ENCODE measurements at regions of chr3 and their contacts with region 1.

Region 1: GRCh38 chr3:13091898-13092611 is 18.8 kb upstream of the IQSEC1 start:
- DNase-seq: peak; percentile 90
- ATAC-seq: peak; percentile 92
- H3K4me3 Mint-ChIP-seq: no peak overlapping the region
- H3K27ac Mint-ChIP-seq: no peak overlapping the region
- H3K4me1 Mint-ChIP-seq: peaks cover 2% of the 10 kb centered on the region
- H3K27me3 Mint-ChIP-seq: no peaks in the 10 kb centered on the region

Region 2: DNA sequence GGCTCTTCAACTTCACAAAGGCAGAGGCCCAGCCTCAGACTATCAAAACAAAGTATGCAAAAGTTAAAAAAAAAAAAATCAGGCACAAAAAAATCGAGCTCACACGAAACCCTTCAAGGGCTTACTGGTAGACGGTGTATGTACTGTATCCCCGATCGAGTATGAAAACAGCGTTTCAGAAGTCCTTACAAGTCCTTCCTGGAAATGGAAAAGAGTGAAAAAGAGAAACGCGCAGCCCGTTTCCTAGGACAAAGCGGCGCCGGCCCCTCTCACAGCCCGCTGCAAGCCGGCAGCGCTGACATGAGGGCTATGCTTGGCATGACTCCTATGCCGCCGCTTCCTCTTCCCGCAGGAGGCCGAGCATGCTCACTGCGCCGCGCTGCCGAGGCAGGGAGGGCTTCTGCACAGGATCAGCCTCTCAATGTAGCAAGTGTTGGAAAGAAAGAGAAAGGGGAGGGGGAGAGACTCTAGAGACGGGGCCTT is 1448.4 kb before region 1 on chr3 and contains the start of gene VGLL4:
- CTCF ChIA-PET with region 1: no interaction called
- POLR2A ChIA-PET with region 1: no interaction called
- intact Hi-C with region 1: no loop called
- DNase-seq: peak; percentile 85
- ATAC-seq: peak; percentile 74
- H3K4me3 Mint-ChIP-seq: peak within 1 kb of the TSS; percentile 99
- H3K27ac Mint-ChIP-seq: peak within 1 kb of the TSS; percentile 99
- H3K4me1 Mint-ChIP-seq: peaks cover 33% of the 10 kb centered on the region
- H3K27me3 Mint-ChIP-seq: no peaks in the 10 kb centered on the region
- total RNA-seq, gene VGLL4: 24.4 to 24.9 TPM

Region 3: DNA sequence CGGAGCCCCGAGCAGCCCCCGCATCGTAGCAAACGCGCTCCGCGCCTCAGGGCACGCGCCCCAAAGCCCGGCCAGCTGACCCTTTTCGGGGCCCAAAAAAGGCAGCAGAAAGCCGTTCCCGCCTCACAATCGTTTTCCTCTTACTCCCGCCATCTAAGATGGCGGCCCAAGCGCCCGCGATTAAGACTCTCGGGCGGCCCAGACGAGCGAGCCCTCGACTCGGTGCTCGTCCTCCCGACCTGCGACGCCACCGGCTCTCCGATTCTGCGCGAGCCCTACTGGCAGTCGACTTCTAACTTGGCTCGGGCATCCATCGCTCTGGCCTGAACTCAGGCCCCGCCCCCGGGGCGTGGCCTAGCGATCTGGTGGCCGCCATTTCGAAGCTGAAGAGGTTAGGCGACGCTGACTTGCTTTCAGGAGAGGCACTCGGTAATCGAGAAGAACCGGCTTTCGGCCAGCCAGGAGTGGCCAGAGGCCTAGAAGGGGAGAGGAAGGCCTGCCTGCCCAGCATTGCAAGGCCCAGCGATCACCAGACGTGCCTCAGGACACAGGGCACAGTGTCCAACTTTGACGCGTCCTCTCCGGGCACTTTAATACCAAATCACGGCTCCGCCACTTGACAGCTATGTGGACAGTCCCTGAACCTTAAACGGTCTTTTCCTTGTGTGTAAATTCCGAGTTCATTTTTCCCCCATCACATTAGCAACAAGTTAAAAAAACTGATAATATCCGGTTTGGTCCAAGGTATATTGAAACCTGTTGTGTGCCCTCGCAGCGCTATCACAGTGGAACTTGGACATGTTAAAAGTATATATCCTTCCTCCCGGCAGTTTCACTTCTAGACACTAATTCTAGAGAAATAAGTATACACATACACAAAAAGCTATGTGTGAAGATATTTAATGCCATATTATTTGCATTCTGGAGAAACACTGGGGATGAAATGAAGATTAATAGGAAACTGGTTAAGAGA is 427.8 kb before region 1 on chr3 and contains the start of gene RAF1:
- CTCF ChIA-PET with region 1: no interaction called
- POLR2A ChIA-PET with region 1: no interaction called
- intact Hi-C with region 1: no loop called
- DNase-seq: peak; percentile 99
- ATAC-seq: peak; percentile 94
- H3K4me3 Mint-ChIP-seq: peak within 1 kb of the TSS; percentile 81
- H3K27ac Mint-ChIP-seq: peak within 1 kb of the TSS; percentile 96
- H3K4me1 Mint-ChIP-seq: peaks cover 25% of the 10 kb centered on the region
- H3K27me3 Mint-ChIP-seq: no peaks in the 10 kb centered on the region
- total RNA-seq, gene RAF1: 66.8 to 74.7 TPM

Region 4: GRCh38 chr3:13080591-13080990 is 11.5 kb before region 1 on chr3:
- CTCF ChIA-PET with region 1: interaction called, 10 read pairs
- POLR2A ChIA-PET with region 1: no interaction called
- intact Hi-C with region 1: no loop called
- DNase-seq: no peak
- ATAC-seq: no peak
- H3K4me3 Mint-ChIP-seq: no peak overlapping the region
- H3K27ac Mint-ChIP-seq: no peak overlapping the region
- H3K4me1 Mint-ChIP-seq: peaks cover 4% of the 10 kb centered on the region
- H3K27me3 Mint-ChIP-seq: no peaks in the 10 kb centered on the region

Region 5: GRCh38 chr3:13282986-13283876 is 191.2 kb after region 1 on chr3:
- CTCF ChIA-PET with region 1: interaction called, 3 read pairs
- POLR2A ChIA-PET with region 1: no interaction called
- intact Hi-C with region 1: loop called (anchors 5 kb)
- DNase-seq: peak; percentile 50
- ATAC-seq: peak; percentile 56
- H3K4me3 Mint-ChIP-seq: peak overlapping the region; percentile 62
- H3K27ac Mint-ChIP-seq: no peak overlapping the region
- H3K4me1 Mint-ChIP-seq: peaks cover 6% of the 10 kb centered on the region
- H3K27me3 Mint-ChIP-seq: peaks cover 40% of the 10 kb centered on the region

Region 6: DNA sequence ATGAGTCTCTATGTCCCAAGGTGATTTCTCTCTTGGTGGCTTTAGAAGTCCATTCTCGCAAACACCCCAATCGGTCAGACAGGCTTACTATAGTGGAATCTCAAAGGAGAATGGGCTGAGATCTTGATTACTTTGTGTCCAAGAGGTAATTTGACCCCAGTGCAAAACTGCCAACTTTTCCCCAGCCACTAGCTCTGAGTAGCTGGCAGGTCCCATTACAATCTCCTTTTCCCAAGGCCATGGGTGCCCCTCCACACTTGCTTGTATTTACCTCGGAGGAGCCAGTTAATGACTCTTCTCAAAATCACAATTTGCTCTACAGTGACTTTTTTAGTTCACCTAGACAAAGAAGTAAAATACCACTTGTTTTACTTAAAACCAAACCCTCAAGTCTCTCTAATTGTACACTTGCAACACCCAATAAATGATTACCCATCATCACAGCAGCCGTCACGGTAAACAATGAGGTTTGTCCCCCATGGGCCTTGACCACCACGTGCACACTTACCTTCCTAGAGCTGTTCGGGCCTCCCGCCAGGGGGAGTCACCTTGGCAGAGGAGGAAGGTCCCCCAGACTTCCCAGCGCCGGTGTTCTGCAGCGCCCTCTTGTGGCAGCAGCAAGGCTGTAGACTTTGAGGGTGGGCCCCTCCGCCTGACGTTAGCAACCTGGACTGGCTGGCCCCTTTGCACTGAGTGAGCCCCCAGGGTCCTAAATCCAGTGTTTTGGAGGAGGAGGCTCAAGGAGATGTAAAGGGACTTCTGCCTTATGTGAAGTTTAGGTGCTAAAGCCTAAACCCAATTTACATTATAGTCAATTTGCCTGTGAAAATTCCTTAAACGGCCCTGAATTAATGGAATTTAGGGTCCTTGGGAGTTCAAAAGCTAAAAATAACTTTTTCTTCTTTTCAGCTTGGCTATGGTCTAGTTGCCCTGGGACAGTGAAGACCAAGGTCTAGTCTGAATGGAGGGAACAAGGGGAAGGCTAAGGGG is 369.4 kb after region 1 on chr3:
- CTCF ChIA-PET with region 1: interaction called, 18 read pairs
- POLR2A ChIA-PET with region 1: no interaction called
- intact Hi-C with region 1: loop called in 1 of 2 experiments (anchors 1 kb)
- DNase-seq: peak; percentile 91
- ATAC-seq: peak; percentile 99
- H3K4me3 Mint-ChIP-seq: no peak overlapping the region
- H3K27ac Mint-ChIP-seq: no peak overlapping the region
- H3K4me1 Mint-ChIP-seq: peaks cover 3% of the 10 kb centered on the region
- H3K27me3 Mint-ChIP-seq: no peaks in the 10 kb centered on the region